ENCODE measurements at regions of chr6 and their contacts with region 1.

Region 1: GRCh38 chr6:41560431-41561192 is 14.4 kb downstream of the FOXP4 start:
- DNase-seq: peak; percentile 73 to 96
- ATAC-seq: peak; percentile 85 to 90 (median 88)
- H3K4me3 ChIP-seq: peak overlapping the region; percentile 53
- H3K4me3 Mint-ChIP-seq: peak overlapping the region; percentile 94
- H3K27ac ChIP-seq: peak overlapping the region; percentile 65
- H3K27ac Mint-ChIP-seq: peak overlapping the region; percentile 88 to 92
- H3K4me1 ChIP-seq: peaks cover 26% of the 10 kb centered on the region
- H3K4me1 Mint-ChIP-seq: peaks cover 25 to 30% of the 10 kb centered on the region in 2 donors
- H3K27me3 ChIP-seq: no peaks in the 10 kb centered on the region
- H3K27me3 Mint-ChIP-seq: peaks cover 0 to 3% of the 10 kb centered on the region in 2 donors
- CTCF ChIP-seq: no peak

Region 2: DNA sequence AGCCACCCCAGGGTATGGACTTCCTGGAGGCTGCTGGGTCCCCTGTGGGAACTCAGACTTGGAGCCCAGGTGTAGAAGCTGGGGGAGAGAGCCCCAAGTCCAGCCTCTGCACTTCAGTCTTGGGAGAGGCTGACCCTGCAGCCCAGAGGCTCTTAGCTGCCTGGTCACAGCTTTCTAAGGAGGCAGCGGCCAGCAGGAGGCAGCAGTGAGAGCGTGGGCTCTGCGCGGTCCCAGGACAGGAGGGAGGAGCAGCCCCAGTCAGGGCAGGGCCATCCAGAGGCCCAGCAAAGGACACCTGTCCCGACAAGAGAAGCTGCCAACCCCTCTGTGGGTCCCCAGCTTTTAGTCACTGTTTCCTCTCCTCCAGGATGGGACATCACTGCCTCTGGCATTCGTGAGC is 369.0 kb before region 1 on chr6:
- intact Hi-C with region 1: no loop called
- DNase-seq: peak; percentile 40 to 60
- ATAC-seq: peak; percentile 65 to 84 (median 79)
- H3K4me3 ChIP-seq: no peak overlapping the region
- H3K4me3 Mint-ChIP-seq: no peak overlapping the region
- H3K27ac ChIP-seq: no peak overlapping the region
- H3K27ac Mint-ChIP-seq: no peak overlapping the region
- H3K4me1 ChIP-seq: peaks cover 17% of the 10 kb centered on the region
- H3K4me1 Mint-ChIP-seq: peaks cover 24 to 36% of the 10 kb centered on the region in 2 donors
- H3K27me3 ChIP-seq: no peaks in the 10 kb centered on the region
- H3K27me3 Mint-ChIP-seq: no peaks in the 10 kb centered on the region
- CTCF ChIP-seq: peak; percentile 40

Region 3: GRCh38 chr6:41442800-41443501 is 117.7 kb before region 1 on chr6:
- intact Hi-C with region 1: no loop called
- DNase-seq: peak in 1 of 2 donors; percentile 55
- ATAC-seq: peak in 1 of 3 donors; percentile 23
- H3K4me3 ChIP-seq: no peak overlapping the region
- H3K4me3 Mint-ChIP-seq: peak overlapping the region; percentile 13
- H3K27ac ChIP-seq: peak overlapping the region; percentile 51
- H3K27ac Mint-ChIP-seq: no peak overlapping the region
- H3K4me1 ChIP-seq: peaks cover 53% of the 10 kb centered on the region
- H3K4me1 Mint-ChIP-seq: peaks cover 33 to 39% of the 10 kb centered on the region in 2 donors
- H3K27me3 ChIP-seq: peaks cover 34% of the 10 kb centered on the region
- H3K27me3 Mint-ChIP-seq: peaks cover 72 to 78% of the 10 kb centered on the region in 2 donors
- CTCF ChIP-seq: peak; percentile 39

Region 4: GRCh38 chr6:41531591-41532582 is 28.7 kb before region 1 on chr6:
- intact Hi-C with region 1: loop called (anchors 1 kb)
- DNase-seq: peak; percentile 51 to 70
- ATAC-seq: peak; percentile 70 to 81 (median 79)
- H3K4me3 ChIP-seq: peak overlapping the region; percentile 12
- H3K4me3 Mint-ChIP-seq: peak overlapping the region; percentile 92
- H3K27ac ChIP-seq: peak overlapping the region; percentile 59
- H3K27ac Mint-ChIP-seq: peak overlapping the region; percentile 92 to 95
- H3K4me1 ChIP-seq: peaks cover 36% of the 10 kb centered on the region
- H3K4me1 Mint-ChIP-seq: peaks cover 32% of the 10 kb centered on the region in 2 donors
- H3K27me3 ChIP-seq: no peaks in the 10 kb centered on the region
- H3K27me3 Mint-ChIP-seq: peaks cover 27 to 34% of the 10 kb centered on the region in 2 donors
- CTCF ChIP-seq: no peak

Region 5: GRCh38 chr6:41545703-41546474 is 14.7 kb before region 1 on chr6 and contains the start of gene FOXP4:
- intact Hi-C with region 1: loop called (anchors 2 kb)
- DNase-seq: peak; percentile 56 to 92
- ATAC-seq: peak; percentile 77 to 90 (median 81)
- H3K4me3 ChIP-seq: peak within 1 kb of the TSS; percentile 59
- H3K4me3 Mint-ChIP-seq: peak within 1 kb of the TSS; percentile 94
- H3K27ac ChIP-seq: no peak within 1 kb of the TSS
- H3K27ac Mint-ChIP-seq: peak within 1 kb of the TSS; percentile 50 to 81
- H3K4me1 ChIP-seq: peaks cover 43% of the 10 kb centered on the region
- H3K4me1 Mint-ChIP-seq: peaks cover 30 to 42% of the 10 kb centered on the region in 2 donors
- H3K27me3 ChIP-seq: peaks cover 15% of the 10 kb centered on the region
- H3K27me3 Mint-ChIP-seq: peaks cover 0 to 12% of the 10 kb centered on the region in 2 donors
- CTCF ChIP-seq: no peak
- total RNA-seq, gene FOXP4: 11.2 to 21.1 (median 14.7) TPM